HEK293T (cell line): ENCODE measurements at regions of chr1 and their contacts with region 1.

Region 1: GRCh38 chr1:47262787-47263413 is 30.9 kb upstream of the TAL1 start:
- DNase-seq: peak; percentile 57

Region 2: DNA sequence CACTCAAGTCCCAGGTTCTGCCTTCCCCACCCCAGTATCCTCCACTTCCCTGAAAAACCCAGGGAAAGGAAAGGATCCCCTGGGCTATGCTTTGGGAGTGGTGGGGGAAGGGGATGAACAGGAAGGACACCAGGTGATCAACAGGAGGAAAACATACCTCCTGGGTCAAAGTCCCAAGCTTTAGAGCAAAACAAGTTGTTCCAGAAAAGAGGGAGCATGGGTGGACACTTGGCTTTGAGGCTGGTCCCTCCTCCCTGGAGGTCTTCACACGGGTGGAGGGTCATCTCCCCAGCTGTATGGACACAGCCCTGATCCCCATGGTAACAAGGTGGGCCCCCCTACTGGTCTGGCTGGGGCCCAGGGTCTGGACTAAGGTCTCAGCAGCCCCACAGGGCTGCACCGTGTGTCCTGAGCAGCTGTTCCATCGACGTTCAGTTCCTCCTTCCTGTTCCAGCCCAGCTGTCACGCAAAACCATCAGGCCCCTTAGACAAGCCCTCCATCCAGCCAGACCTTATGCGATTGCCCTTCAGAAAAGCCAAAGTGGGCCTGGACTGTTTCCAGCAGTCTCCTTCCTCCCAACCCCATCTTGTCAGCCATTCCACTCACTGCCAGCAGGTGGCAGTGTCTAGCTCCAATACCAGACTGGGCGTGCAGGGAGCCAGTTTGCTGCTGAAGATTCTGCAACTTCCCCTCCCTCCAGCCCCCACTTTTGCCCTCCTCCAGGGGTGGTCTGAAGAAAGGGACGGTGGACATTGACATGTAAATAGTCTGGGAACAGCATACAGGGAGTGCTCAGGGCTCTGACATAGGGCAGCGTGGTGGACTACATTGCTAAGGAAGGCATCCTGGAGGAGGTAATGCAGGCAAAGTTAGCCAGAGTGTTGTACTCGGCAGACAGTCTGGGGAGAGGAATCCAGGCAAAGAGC is 70.2 kb before region 1 on chr1:
- CTCF ChIA-PET with region 1: interaction called, 20 read pairs
- POLR2A ChIA-PET with region 1: no interaction called
- DNase-seq: peak; percentile 83

Region 3: DNA sequence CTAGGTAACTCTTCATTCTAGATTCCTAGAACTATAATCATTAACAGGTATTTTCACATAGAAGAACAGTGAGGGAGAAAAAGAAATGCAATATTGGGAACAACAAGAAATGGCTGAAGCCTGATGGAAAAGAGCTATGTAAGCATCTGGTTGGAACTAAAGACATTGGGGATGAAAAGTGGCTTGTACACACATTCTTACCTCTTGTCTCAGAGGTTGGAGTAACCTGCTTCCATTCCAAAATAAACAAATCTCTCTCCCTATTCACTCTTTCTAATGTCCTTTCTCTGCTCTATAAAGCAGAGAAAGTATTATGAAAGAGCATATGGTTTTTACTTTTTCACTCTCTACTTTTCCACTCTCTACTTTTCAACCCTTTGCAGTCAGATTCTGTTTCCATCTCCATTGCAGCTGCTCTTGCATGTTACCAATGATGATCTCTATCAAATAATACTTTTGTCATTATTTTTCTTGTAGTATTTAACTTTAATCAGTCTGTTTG is 108.2 kb after region 1 on chr1:
- CTCF ChIA-PET with region 1: no interaction called
- POLR2A ChIA-PET with region 1: no interaction called
- DNase-seq: no peak